Endothelial cell of umbilical vein (primary cell): ENCODE measurements at regions of chr10 and their contacts with region 1.

Region 1: GRCh38 chr10:104308439-104308903 is 29.8 kb downstream of the ITPRIP start:
- DNase-seq: no peak
- H3K4me3 ChIP-seq: no peak overlapping the region
- H3K27ac ChIP-seq: no peak overlapping the region
- H3K4me1 ChIP-seq: peaks cover 12% of the 10 kb centered on the region
- H3K27me3 ChIP-seq: no peaks in the 10 kb centered on the region
- CTCF ChIP-seq: no peak
- POLR2A ChIP-seq: no peak

Region 2: DNA sequence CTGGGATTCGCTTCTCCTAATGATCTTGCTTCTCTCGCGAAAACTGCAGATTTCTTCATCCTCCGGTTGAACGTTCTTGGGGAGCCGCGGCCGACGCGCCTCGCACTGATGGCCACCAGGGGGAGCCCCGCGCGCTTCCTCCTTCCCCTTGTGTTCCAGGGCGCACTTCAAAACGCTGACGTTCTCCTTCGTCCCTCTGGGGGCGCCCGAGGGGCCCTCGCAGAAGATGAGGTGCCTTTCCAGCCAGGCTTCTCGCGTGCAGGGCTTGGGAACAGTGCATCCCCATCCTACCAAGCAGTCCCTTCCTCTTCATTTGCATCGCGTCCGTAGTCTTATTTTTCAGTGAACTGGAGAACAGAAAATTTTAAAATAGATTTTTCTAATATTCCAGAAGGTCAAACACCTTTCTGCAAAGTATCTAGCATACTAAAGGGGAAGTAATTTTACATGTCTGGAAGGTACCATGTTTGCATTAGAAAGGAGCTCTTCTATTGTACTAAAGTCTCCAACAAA is 17.0 kb before region 1 on chr10:
- CTCF ChIA-PET with region 1: interaction called, 81 read pairs
- POLR2A ChIA-PET with region 1: no interaction called
- dilution Hi-C with region 1: no loop called
- intact Hi-C with region 1: loop called (anchors 1 kb)
- DNase-seq: peak; percentile 84
- H3K4me3 ChIP-seq: no peak overlapping the region
- H3K27ac ChIP-seq: no peak overlapping the region
- H3K4me1 ChIP-seq: peaks cover 22% of the 10 kb centered on the region
- H3K27me3 ChIP-seq: peaks cover 4 to 9% of the 10 kb centered on the region in 2 experiments
- CTCF ChIP-seq: peak; percentile 100
- POLR2A ChIP-seq: no peak

Region 3: GRCh38 chr10:104322416-104322782 is 13.9 kb after region 1 on chr10:
- CTCF ChIA-PET with region 1: interaction called, 33 read pairs
- POLR2A ChIA-PET with region 1: interaction called, 4 read pairs
- dilution Hi-C with region 1: no loop called
- intact Hi-C with region 1: no loop called
- DNase-seq: no peak
- H3K4me3 ChIP-seq: no peak overlapping the region
- H3K27ac ChIP-seq: no peak overlapping the region
- H3K4me1 ChIP-seq: peaks cover 43% of the 10 kb centered on the region
- H3K27me3 ChIP-seq: no peaks in the 10 kb centered on the region
- CTCF ChIP-seq: no peak
- POLR2A ChIP-seq: no peak

Region 4: GRCh38 chr10:104328896-104329710 is 20.6 kb after region 1 on chr10:
- CTCF ChIA-PET with region 1: interaction called, 33 read pairs
- POLR2A ChIA-PET with region 1: interaction called, 4 read pairs
- dilution Hi-C with region 1: no loop called
- intact Hi-C with region 1: loop called (anchors 1 kb)
- DNase-seq: peak; percentile 86
- H3K4me3 ChIP-seq: peak overlapping the region in 1 of 3 experiments; percentile 1
- H3K27ac ChIP-seq: peak overlapping the region; percentile 96
- H3K4me1 ChIP-seq: peaks cover 91% of the 10 kb centered on the region
- H3K27me3 ChIP-seq: no peaks in the 10 kb centered on the region
- CTCF ChIP-seq: no peak
- POLR2A ChIP-seq: no peak

Region 5: DNA sequence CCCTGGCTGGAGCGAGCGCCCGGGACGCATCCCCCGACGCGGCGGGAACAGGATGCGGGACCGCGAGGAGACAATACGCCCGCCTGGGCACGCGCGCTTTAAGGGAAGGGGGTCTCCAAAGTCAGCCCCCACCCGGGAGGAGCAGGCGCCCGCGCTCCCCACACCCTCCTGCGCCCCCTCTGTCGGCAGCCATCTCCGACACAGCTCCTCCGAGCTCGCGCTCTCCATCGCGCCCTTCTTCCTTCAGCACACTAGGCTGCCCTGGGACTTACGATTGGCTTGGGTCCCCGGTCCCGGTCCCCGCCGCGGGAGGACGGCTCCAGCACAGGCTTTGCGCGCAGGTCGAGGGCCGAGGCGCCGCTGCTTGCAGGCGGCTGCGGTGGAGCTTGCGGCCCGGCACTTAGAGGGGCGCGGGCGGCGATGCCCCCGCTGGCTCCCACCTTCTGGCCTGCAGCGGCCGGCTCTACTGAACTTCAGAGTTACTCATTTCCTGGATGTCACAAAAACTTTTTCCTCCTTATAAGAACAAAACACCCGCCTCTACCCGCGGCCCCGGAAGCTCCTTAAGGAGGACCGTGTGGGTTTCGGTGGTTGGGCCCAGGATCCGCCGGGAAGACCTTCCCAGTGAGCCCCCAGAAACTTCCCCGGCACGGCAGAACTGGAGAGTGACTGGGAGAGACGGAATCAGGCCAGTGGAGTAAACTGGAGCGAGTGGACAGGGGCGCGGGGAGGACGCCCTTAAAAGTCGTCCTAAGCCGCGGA is 29.7 kb after region 1 on chr10 and contains the start of gene ITPRIP:
- CTCF ChIA-PET with region 1: interaction called, 36 read pairs
- POLR2A ChIA-PET with region 1: interaction called, 3 read pairs
- dilution Hi-C with region 1: no loop called
- intact Hi-C with region 1: loop called (anchors 1 kb)
- DNase-seq: peak; percentile 93
- H3K4me3 ChIP-seq: peak within 1 kb of the TSS; percentile 64 to 99 (median 94)
- H3K27ac ChIP-seq: peak within 1 kb of the TSS; percentile 100
- H3K4me1 ChIP-seq: peaks cover 53% of the 10 kb centered on the region
- H3K27me3 ChIP-seq: no peaks in the 10 kb centered on the region
- CTCF ChIP-seq: peak; percentile 14 to 32
- POLR2A ChIP-seq: peak; percentile 77
- total RNA-seq, gene ITPRIP: 31.4 and 33.3 TPM in 2 replicates

Region 6: GRCh38 chr10:104345941-104346340 is 37.5 kb after region 1 on chr10:
- CTCF ChIA-PET with region 1: interaction called, 107 read pairs
- POLR2A ChIA-PET with region 1: no interaction called
- dilution Hi-C with region 1: no loop called
- intact Hi-C with region 1: loop called (anchors 1 kb)
- DNase-seq: no peak
- H3K4me3 ChIP-seq: no peak overlapping the region
- H3K27ac ChIP-seq: no peak overlapping the region
- H3K4me1 ChIP-seq: peaks cover 21% of the 10 kb centered on the region
- H3K27me3 ChIP-seq: no peaks in the 10 kb centered on the region
- CTCF ChIP-seq: no peak
- POLR2A ChIP-seq: no peak

Region 7: GRCh38 chr10:104353325-104354048 is 45.0 kb after region 1 on chr10 and contains the start of gene CFAP58:
- CTCF ChIA-PET with region 1: interaction called, 107 read pairs
- POLR2A ChIA-PET with region 1: no interaction called
- dilution Hi-C with region 1: no loop called
- intact Hi-C with region 1: loop called (anchors 1 kb)
- DNase-seq: peak; percentile 88
- H3K4me3 ChIP-seq: peak within 1 kb of the TSS; percentile 38 to 66 (median 42)
- H3K27ac ChIP-seq: no peak within 1 kb of the TSS
- H3K4me1 ChIP-seq: peaks cover 13% of the 10 kb centered on the region
- H3K27me3 ChIP-seq: peaks cover 0 to 5% of the 10 kb centered on the region in 2 experiments
- CTCF ChIP-seq: peak; percentile 66 to 75
- POLR2A ChIP-seq: no peak
- total RNA-seq, gene CFAP58: 0.29 and 0.35 TPM in 2 replicates

Region 8: DNA sequence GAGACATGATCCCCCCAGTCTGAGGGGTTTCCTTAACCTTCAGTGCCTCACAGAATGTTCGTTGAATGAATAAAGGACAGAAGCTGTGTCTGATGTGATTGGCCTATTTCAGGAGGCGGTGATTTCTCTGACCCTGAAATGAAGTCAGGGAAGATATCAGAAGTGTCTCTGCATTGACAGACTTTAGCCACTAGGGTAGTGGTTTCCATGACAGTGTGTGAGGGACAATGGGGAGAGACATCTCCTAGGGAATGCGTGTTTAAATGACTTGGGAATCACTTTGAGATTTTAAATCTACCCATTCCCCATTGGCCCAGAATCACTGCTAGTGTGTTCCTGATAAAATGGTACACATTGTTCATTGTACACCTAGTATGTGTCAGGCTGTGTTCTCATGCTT is 177.2 kb after region 1 on chr10:
- CTCF ChIA-PET with region 1: no interaction called
- POLR2A ChIA-PET with region 1: no interaction called
- dilution Hi-C with region 1: no loop called
- intact Hi-C with region 1: no loop called
- DNase-seq: no peak
- H3K4me3 ChIP-seq: no peak overlapping the region
- H3K27ac ChIP-seq: no peak overlapping the region
- H3K4me1 ChIP-seq: no peaks in the 10 kb centered on the region
- H3K27me3 ChIP-seq: no peaks in the 10 kb centered on the region
- CTCF ChIP-seq: no peak
- POLR2A ChIP-seq: no peak